GM12878 (cell line): ENCODE measurements at regions of chr12 and their contacts with region 1.

Region 1: DNA sequence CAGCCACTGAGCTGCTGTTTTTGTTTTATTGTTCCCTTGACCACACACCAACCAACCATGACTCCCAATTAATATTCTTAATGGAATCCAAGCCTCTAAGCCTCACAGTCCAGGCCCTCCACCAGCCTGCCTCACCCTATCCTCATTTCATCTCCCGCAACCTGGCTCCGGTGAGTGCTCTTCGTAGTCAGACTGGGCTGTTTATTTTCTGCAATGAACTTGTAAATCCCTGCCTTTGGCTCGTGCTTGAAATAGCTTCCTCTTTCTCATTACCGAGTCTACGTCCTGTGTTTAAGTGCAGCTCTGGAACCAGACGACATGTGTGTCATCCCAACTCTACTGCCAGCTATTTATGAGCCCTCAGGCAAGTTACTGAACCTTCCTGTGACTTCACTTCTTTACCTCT is 12.4 kb upstream of the ETFBKMT start:
- DNase-seq: no peak
- ATAC-seq: no peak
- H3K4me3 ChIP-seq: no peak overlapping the region
- H3K27ac ChIP-seq: no peak overlapping the region
- H3K4me1 ChIP-seq: no peaks in the 10 kb centered on the region
- H3K27me3 ChIP-seq: no peaks in the 10 kb centered on the region
- CTCF ChIP-seq: no peak
- EP300 ChIP-seq: no peak
- POLR2A ChIP-seq: no peak
- RAD21 ChIP-seq: no peak

Region 2: GRCh38 chr12:31245822-31246469 is 401.1 kb before region 1 on chr12:
- CTCF ChIA-PET with region 1: no interaction called
- POLR2A ChIA-PET with region 1: no interaction called
- RAD21 ChIA-PET with region 1: no interaction called
- SMC1A ChIA-PET with region 1: no interaction called
- in situ Hi-C with region 1: loop called (anchors 5 kb)
- intact Hi-C with region 1: no loop called
- DNase-seq: no peak
- ATAC-seq: peak; percentile 60
- H3K4me3 ChIP-seq: no peak overlapping the region
- H3K27ac ChIP-seq: no peak overlapping the region
- H3K4me1 ChIP-seq: no peaks in the 10 kb centered on the region
- H3K27me3 ChIP-seq: no peaks in the 10 kb centered on the region
- CTCF ChIP-seq: peak in 2 of 3 experiments; percentile 22 to 32; a peak in 3 of 6 replicates
- EP300 ChIP-seq: no peak
- POLR2A ChIP-seq: no peak
- RAD21 ChIP-seq: no peak

Region 3: GRCh38 chr12:31629756-31630732 is 17.0 kb before region 1 on chr12:
- CTCF ChIA-PET with region 1: interaction called, 10 read pairs
- POLR2A ChIA-PET with region 1: no interaction called
- RAD21 ChIA-PET with region 1: no interaction called
- SMC1A ChIA-PET with region 1: no interaction called
- in situ Hi-C with region 1: no loop called
- intact Hi-C with region 1: no loop called
- DNase-seq: no peak
- ATAC-seq: no peak
- H3K4me3 ChIP-seq: no peak overlapping the region
- H3K27ac ChIP-seq: no peak overlapping the region
- H3K4me1 ChIP-seq: peaks cover 8% of the 10 kb centered on the region; the same call in 1 of the 2 replicates
- H3K27me3 ChIP-seq: no peaks in the 10 kb centered on the region
- CTCF ChIP-seq: no peak
- EP300 ChIP-seq: no peak
- POLR2A ChIP-seq: no peak
- RAD21 ChIP-seq: no peak

Region 4: DNA sequence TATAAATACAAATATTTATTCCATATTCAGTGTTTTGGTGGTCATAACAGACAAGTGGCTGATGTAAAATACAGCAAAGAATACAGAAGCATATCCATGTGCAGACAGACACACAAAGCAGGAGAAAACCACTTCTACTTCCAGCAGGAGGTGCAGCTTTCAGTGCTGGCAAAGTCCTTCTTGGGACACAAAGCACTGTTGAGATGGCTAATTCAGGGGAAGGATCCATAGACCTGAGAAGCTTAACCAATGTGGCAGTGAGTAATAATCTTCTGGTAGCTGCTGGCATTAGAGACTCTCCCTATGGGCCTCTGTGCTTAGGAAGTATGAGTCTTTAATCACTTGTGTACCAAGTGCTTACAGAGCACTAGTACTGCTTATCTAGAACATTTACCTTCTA is 55.0 kb after region 1 on chr12:
- CTCF ChIA-PET with region 1: no interaction called
- POLR2A ChIA-PET with region 1: no interaction called
- RAD21 ChIA-PET with region 1: no interaction called
- SMC1A ChIA-PET with region 1: no interaction called
- in situ Hi-C with region 1: no loop called
- intact Hi-C with region 1: no loop called
- DNase-seq: no peak
- ATAC-seq: no peak
- H3K4me3 ChIP-seq: no peak overlapping the region
- H3K27ac ChIP-seq: no peak overlapping the region
- H3K4me1 ChIP-seq: no peaks in the 10 kb centered on the region
- H3K27me3 ChIP-seq: no peaks in the 10 kb centered on the region
- CTCF ChIP-seq: no peak
- EP300 ChIP-seq: no peak
- POLR2A ChIP-seq: no peak
- RAD21 ChIP-seq: 0 out of 2 replicates have a peak, but pooled peaks have one; percentile 7

Region 5: DNA sequence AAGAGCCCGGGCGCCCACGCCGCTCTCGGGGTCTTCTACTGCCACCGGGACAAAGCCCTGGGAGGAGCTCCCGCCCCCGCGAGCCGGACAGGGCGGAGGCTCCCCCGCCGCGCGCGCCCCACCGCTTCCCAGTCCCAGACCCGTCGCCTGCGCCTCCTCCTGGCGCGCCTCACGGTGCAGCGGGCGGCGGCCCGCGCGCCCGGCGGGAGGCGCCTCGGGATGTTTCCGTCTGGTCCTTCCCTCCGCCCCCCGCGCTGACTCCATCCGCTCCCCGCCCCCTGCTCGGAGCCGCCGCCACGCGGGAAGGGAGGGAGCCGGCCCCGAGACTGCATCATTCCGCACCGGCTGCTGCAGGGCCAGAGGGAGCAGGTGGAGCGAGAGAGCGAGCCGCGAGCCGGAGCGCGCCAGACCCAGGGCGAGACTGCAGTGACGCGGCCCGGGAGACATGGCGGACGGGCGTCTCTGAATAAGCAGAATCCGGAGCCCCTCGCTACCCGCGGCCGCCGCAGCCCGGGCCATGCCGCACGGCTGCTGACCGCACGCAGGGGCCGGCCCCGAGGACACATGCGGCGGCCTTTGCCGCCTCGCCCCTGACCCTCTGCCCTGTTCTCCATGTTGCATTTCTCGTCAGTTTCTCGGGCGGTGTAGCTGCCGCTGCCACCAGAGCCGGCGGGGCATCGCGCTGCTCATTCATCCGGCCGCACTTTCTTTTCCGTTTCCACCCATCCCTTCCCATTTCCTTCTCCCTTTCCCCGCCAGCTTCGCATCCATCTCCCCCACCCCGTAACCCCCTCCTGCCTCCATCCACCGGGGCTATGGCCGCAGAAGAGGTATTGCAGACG is 459.6 kb after region 1 on chr12 and contains the start of gene BICD1:
- CTCF ChIA-PET with region 1: no interaction called
- POLR2A ChIA-PET with region 1: no interaction called
- RAD21 ChIA-PET with region 1: no interaction called
- SMC1A ChIA-PET with region 1: interaction called, 15 read pairs
- in situ Hi-C with region 1: no loop called
- intact Hi-C with region 1: no loop called
- DNase-seq: peak; percentile 32
- ATAC-seq: peak; percentile 88
- H3K4me3 ChIP-seq: peak within 1 kb of the TSS; percentile 80
- H3K27ac ChIP-seq: peak within 1 kb of the TSS; percentile 63
- H3K4me1 ChIP-seq: peaks cover 5% of the 10 kb centered on the region
- H3K27me3 ChIP-seq: no peaks in the 10 kb centered on the region
- CTCF ChIP-seq: peak; percentile 2 to 56 (median 21); a peak in 3 of 6 replicates
- EP300 ChIP-seq: no peak
- POLR2A ChIP-seq: peak; percentile 94
- RAD21 ChIP-seq: peak; percentile 44; the same call in 1 of the 2 replicates
- polyA plus RNA-seq, gene BICD1: 4.7 to 5.6 TPM

Region 6: GRCh38 chr12:32455607-32456071 is 808.5 kb after region 1 on chr12:
- CTCF ChIA-PET with region 1: no interaction called
- POLR2A ChIA-PET with region 1: no interaction called
- RAD21 ChIA-PET with region 1: no interaction called
- SMC1A ChIA-PET with region 1: no interaction called
- in situ Hi-C with region 1: no loop called
- intact Hi-C with region 1: loop called (anchors 2 kb)
- DNase-seq: no peak
- ATAC-seq: peak; percentile 48; the same call in 2 of the 3 replicates
- H3K4me3 ChIP-seq: no peak overlapping the region
- H3K27ac ChIP-seq: no peak overlapping the region
- H3K4me1 ChIP-seq: no peaks in the 10 kb centered on the region; the same call in 1 of the 2 replicates
- H3K27me3 ChIP-seq: no peaks in the 10 kb centered on the region
- CTCF ChIP-seq: peak; percentile 46 to 70 (median 49); a peak in 5 of 6 replicates
- EP300 ChIP-seq: no peak
- POLR2A ChIP-seq: no peak
- RAD21 ChIP-seq: peak; percentile 82

Region 7: GRCh38 chr12:32679091-32679919 is 1032.2 kb after region 1 on chr12 and contains the start of gene DNM1L:
- CTCF ChIA-PET with region 1: no interaction called
- POLR2A ChIA-PET with region 1: no interaction called
- RAD21 ChIA-PET with region 1: no interaction called
- SMC1A ChIA-PET with region 1: no interaction called
- in situ Hi-C with region 1: loop called (anchors 5 kb)
- intact Hi-C with region 1: loop called (anchors 5 kb)
- DNase-seq: peak; percentile 79
- ATAC-seq: peak; percentile 97
- H3K4me3 ChIP-seq: peak within 1 kb of the TSS; percentile 100
- H3K27ac ChIP-seq: peak within 1 kb of the TSS; percentile 64
- H3K4me1 ChIP-seq: peaks cover 14% of the 10 kb centered on the region
- H3K27me3 ChIP-seq: no peaks in the 10 kb centered on the region
- CTCF ChIP-seq: no peak
- EP300 ChIP-seq: no peak
- POLR2A ChIP-seq: peak; percentile 94
- RAD21 ChIP-seq: no peak
- polyA plus RNA-seq, gene DNM1L: 23.1 to 29.3 TPM